MCF 10A (cell line): ENCODE measurements at regions of chr17 and their contacts with region 1.

Region 1: DNA sequence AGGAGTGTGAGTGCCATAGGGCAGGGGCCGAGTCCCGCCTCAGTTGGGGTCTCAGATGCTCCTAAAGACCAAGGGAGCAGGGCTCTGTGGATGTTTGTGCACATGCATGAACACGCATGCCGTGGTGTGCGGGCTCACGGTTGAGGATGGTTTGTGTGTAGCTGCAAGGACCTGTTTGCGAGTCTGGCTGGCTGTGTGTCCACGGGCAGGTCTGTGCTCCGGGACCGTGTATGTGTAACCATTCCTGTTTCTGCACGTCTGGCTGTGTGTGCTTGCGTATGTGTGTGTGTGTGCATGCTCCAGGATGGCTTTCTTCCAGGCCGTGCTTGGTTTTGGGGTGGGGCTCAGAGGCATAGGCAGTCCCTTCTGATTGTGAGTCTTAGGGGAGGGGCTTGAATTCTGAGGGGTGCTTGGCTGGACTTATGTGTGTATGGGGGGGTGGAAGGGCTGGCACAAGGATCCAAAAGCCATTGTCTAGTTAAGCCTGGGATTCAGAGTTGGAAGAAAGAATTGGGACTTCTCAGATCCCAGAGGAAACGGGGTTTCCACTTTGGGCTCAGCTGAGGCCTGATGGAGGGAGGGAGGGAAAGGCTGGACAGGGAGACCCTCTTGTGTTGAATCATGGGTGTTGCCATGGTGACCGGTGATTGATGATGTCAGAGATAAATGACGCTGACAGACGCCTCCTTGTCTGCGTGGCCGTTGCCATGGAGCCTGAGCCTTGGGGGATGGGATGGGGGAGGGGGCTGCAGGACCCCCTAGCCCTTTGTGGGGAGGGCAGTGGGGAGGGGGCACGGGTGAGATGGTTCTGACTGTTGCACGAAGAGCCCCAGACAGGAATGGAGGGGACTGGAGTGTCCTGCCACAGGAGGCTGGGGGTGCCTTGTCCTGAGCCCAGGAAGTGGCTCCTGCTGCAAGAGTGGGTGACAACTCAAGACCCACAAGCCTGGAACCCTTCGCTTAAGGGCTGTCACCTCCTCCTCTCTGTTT is 14.3 kb downstream of the GJD3 start:
- DNase-seq: peak; percentile 65
- H3K4me3 Mint-ChIP-seq: peak overlapping the region; percentile 56
- H3K27ac Mint-ChIP-seq: peak overlapping the region; percentile 77
- H3K4me1 Mint-ChIP-seq: peaks cover 40% of the 10 kb centered on the region
- H3K27me3 Mint-ChIP-seq: no peaks in the 10 kb centered on the region
- CTCF ChIP-seq: no peak

Region 2: DNA sequence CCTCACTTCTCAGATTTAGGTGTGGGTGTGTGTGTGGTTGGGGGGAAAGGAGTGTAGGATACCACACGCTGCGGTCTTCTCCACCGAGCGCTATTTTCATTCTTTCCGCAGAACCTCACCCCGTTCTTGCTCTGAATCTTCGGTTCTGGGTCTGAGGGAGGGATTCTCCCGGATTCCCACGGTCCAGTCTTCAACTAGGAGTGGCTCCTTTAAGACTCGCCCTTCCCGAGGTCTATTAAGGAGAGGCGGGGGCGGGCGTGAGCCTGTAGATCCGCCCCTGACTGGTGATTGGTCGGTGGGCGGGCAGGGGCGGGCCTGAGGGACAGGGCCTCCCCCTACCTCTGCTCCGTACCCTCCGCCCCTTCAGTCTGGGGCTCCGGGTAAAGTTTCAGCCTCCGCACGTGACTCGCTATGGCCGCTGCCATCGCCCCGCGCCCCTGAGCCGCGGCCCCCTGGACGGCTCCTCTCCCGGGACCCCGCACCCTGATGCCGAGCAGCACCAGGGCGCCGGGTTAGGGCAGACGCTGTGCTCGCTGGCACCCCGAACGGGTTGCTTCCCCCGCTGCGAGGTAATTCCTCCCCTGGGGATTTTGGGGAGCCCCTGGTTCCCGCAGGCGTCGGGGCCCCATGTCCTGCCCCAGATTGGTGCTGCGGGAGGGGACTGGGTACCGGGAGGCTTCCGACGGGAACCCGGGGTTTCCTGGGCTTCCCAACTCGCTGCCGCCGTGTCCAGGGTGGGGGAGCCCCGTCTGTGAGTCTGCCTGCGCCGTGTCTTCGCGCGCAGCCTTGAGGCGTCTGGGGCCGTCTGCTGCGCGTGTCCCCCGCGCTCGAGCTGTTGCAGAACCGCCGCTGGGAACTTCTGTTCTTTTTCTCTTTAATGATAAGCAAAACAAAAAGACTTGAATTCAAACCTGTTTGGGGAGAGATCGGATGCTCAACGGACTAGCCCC is 32.1 kb before region 1 on chr17:
- CTCF ChIA-PET with region 1: interaction called, 396 read pairs
- POLR2A ChIA-PET with region 1: interaction called, 24 read pairs
- intact Hi-C with region 1: no loop called
- DNase-seq: peak; percentile 97
- H3K4me3 Mint-ChIP-seq: peak overlapping the region; percentile 81
- H3K27ac Mint-ChIP-seq: peak overlapping the region; percentile 32
- H3K4me1 Mint-ChIP-seq: peaks cover 86% of the 10 kb centered on the region
- H3K27me3 Mint-ChIP-seq: no peaks in the 10 kb centered on the region
- CTCF ChIP-seq: no peak